Activated CD8-positive, alpha-beta T cell treated with anti-CD3 and anti-CD28 coated beads, Interleukin-2, amount 10 ng/mL, durations not matched to agents 7 days and 5 days (primary cell): ENCODE measurements at regions of chr12 and their contacts with region 1.

Region 1: GRCh38 chr12:119988782-119989668 is at the start of gene BICDL1:
- DNase-seq: peak; percentile 97
- ATAC-seq: peak; percentile 87
- H3K4me3 Mint-ChIP-seq: peak within 1 kb of the TSS; percentile 86
- H3K27ac Mint-ChIP-seq: peak within 1 kb of the TSS; percentile 80
- H3K4me1 Mint-ChIP-seq: peaks cover 34% of the 10 kb centered on the region
- H3K27me3 Mint-ChIP-seq: peaks cover 2% of the 10 kb centered on the region
- total RNA-seq, gene BICDL1: 62.4 to 64.8 TPM

Region 2: GRCh38 chr12:120012067-120012621 is 23.1 kb after region 1 on chr12:
- CTCF ChIA-PET with region 1: interaction called, 45 read pairs
- POLR2A ChIA-PET with region 1: interaction called, 72 read pairs
- DNase-seq: peak; percentile 83
- ATAC-seq: peak; percentile 75
- H3K4me3 Mint-ChIP-seq: peak overlapping the region; percentile 19
- H3K27ac Mint-ChIP-seq: peak overlapping the region; percentile 86
- H3K4me1 Mint-ChIP-seq: peaks cover 85% of the 10 kb centered on the region
- H3K27me3 Mint-ChIP-seq: no peaks in the 10 kb centered on the region

Region 3: DNA sequence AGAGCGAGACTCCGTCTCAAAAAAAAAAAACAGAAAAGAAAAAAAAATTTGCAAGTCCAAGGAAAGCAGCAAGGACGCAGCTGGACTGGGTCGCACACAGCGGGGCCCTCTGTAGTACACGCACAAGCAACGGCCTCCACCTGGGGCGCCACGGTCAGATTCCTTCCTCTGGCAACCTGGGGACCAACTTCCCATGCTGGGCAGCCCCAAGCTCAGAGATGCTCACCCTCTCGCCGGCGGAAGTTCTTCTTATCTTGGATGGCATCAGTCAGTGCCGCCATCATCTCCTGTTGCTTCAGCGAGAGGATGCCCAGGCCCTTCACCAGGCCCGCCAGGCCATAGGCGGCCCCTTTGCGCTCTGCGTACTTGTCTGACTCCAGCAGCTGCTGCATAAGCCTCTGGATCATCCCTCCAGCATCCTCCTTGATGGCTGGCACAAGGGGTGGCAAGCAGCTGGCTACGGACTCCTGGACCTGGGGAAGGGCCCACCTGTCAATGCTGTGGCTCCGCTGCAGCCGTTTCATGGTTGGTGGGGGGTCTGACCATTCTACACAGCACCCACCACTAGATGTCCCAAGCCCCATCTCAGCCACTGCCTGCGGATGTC is 162.0 kb after region 1 on chr12:
- CTCF ChIA-PET with region 1: no interaction called
- POLR2A ChIA-PET with region 1: no interaction called
- DNase-seq: no peak
- ATAC-seq: no peak
- H3K4me3 Mint-ChIP-seq: no peak overlapping the region
- H3K27ac Mint-ChIP-seq: no peak overlapping the region
- H3K4me1 Mint-ChIP-seq: peaks cover 3% of the 10 kb centered on the region
- H3K27me3 Mint-ChIP-seq: no peaks in the 10 kb centered on the region

Region 4: DNA sequence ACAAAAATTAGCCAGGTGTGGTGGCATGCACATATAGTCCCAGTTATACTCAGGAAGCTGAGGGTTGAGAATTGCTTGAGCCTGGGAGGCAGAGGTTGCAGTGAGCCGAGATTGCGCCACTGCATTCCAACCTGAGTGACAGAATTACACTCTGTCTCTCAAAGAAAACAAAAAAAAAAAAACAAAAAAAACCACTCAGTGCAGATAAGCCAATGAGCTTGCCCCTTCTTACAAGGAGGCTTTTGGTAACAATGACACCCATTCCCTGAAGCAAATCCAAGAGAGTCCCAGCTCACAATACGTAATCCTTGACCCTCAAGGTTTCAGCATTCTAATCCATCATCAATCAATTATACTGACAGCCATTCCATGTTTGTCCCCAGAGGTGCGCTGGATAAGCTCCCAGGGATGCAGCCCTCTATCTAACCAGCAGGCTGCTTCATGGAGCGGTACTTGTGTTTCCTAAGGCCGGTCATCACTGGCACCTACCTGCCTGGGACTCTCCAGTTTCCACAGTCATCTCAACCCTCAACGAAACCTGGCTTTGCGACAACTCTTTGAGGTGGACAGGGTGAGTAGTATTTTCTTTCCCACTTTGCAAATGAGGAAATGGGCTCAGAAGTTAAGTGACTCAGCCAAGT is 193.1 kb after region 1 on chr12:
- CTCF ChIA-PET with region 1: no interaction called
- POLR2A ChIA-PET with region 1: no interaction called
- DNase-seq: no peak
- ATAC-seq: no peak
- H3K4me3 Mint-ChIP-seq: no peak overlapping the region
- H3K27ac Mint-ChIP-seq: peak overlapping the region; percentile 25
- H3K4me1 Mint-ChIP-seq: peaks cover 4% of the 10 kb centered on the region
- H3K27me3 Mint-ChIP-seq: no peaks in the 10 kb centered on the region

Region 5: GRCh38 chr12:120265473-120266179 is 276.6 kb after region 1 on chr12 and contains the start of gene PXN:
- CTCF ChIA-PET with region 1: no interaction called
- POLR2A ChIA-PET with region 1: no interaction called
- DNase-seq: peak; percentile 92
- ATAC-seq: peak; percentile 92
- H3K4me3 Mint-ChIP-seq: peak within 1 kb of the TSS; percentile 81
- H3K27ac Mint-ChIP-seq: peak within 1 kb of the TSS; percentile 77
- H3K4me1 Mint-ChIP-seq: peaks cover 47% of the 10 kb centered on the region
- H3K27me3 Mint-ChIP-seq: no peaks in the 10 kb centered on the region
- total RNA-seq, gene PXN: 123 to 127 TPM